Panc1 (cell line): ENCODE measurements at regions of chr4 and their contacts with region 1.

Region 1: DNA sequence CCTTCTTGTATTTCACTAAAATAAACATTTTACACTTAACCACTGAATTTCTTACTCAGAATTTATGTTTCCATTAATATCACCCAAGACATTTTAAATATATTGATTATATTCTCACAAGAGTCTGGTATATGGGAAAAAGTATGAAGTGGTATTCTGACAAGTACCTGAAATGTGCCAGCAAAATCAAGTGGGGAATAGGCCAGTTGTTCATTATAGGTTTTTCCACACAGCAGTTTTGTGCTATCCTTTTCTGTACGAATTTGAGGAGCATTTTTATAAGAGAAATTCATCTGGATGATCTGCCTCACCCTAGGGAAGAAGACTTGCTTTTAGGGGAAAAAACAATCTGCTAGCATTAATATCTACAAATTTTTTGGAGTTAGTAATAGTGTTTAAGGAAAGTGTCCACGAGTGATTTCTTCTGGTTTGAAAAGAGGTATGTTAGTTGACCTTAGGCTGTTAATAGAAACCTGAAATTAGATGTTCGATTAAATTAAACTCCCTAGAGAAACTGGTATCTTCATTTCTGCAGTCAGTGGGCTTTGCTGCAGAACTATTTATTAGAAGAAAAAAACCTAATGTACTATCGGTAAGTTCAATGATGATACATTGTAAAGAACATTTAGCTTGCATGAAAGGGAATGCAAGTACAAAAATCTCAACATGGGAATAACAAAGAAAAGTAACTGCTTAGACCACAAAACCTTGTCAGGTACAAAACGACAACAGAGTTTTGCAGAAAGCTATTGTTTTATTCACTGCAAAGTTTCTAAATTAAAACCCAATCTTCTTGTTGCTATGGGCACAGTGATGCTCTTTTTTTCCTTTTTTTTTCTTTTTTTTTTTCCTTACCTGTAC is 1.8 kb downstream of the KLF3 start:
- DNase-seq: no peak
- ATAC-seq: no peak
- H3K4me3 ChIP-seq: peak overlapping the region; percentile 66 to 81
- H3K27ac ChIP-seq: peak overlapping the region; percentile 91
- H3K4me1 ChIP-seq: peaks cover 41% of the 10 kb centered on the region
- H3K27me3 ChIP-seq: no peaks in the 10 kb centered on the region
- CTCF ChIP-seq: no peak

Region 2: GRCh38 chr4:38523054-38523453 is 142.7 kb before region 1 on chr4:
- CTCF ChIA-PET with region 1: no interaction called
- POLR2A ChIA-PET with region 1: interaction called, 10 read pairs
- in situ Hi-C with region 1: no loop called
- intact Hi-C with region 1: no loop called
- DNase-seq: no peak
- ATAC-seq: no peak
- H3K4me3 ChIP-seq: no peak overlapping the region
- H3K27ac ChIP-seq: no peak overlapping the region
- H3K4me1 ChIP-seq: no peaks in the 10 kb centered on the region
- H3K27me3 ChIP-seq: no peaks in the 10 kb centered on the region
- CTCF ChIP-seq: no peak